CD4-positive, alpha-beta T cell (primary cell): ENCODE measurements at regions of chr1 and their contacts with region 1.

Region 1: GRCh38 chr1:3453203-3453761 is 1.2 kb upstream of the ARHGEF16 start:
- DNase-seq: peak; percentile 58 to 83 (median 68)
- ATAC-seq: peak; percentile 85
- H3K4me3 ChIP-seq: no peak overlapping the region
- H3K4me3 Mint-ChIP-seq: peak overlapping the region; percentile 81
- H3K27ac ChIP-seq: no peak overlapping the region
- H3K27ac Mint-ChIP-seq: no peak overlapping the region
- H3K4me1 ChIP-seq: peaks cover 22% of the 10 kb centered on the region
- H3K4me1 Mint-ChIP-seq: peaks cover 3% of the 10 kb centered on the region
- H3K27me3 ChIP-seq: peaks cover 19 to 21% of the 10 kb centered on the region in 2 experiments
- H3K27me3 Mint-ChIP-seq: peaks cover 18% of the 10 kb centered on the region
- CTCF ChIP-seq: peak; percentile 93

Region 2: GRCh38 chr1:3181956-3182355 is 271.3 kb before region 1 on chr1:
- CTCF ChIA-PET with region 1: no interaction called
- POLR2A ChIA-PET with region 1: no interaction called
- intact Hi-C with region 1: no loop called
- DNase-seq: no peak
- ATAC-seq: no peak
- H3K4me3 ChIP-seq: no peak overlapping the region
- H3K4me3 Mint-ChIP-seq: no peak overlapping the region
- H3K27ac ChIP-seq: no peak overlapping the region
- H3K27ac Mint-ChIP-seq: no peak overlapping the region
- H3K4me1 ChIP-seq: no peaks in the 10 kb centered on the region
- H3K4me1 Mint-ChIP-seq: no peaks in the 10 kb centered on the region
- H3K27me3 ChIP-seq: peaks cover 5 to 9% of the 10 kb centered on the region in 2 experiments
- H3K27me3 Mint-ChIP-seq: peaks cover 21% of the 10 kb centered on the region
- CTCF ChIP-seq: no peak

Region 3: GRCh38 chr1:3483801-3484444 is 30.6 kb after region 1 on chr1:
- CTCF ChIA-PET with region 1: interaction called, 6 read pairs
- POLR2A ChIA-PET with region 1: interaction called, 3 read pairs
- intact Hi-C with region 1: loop called (anchors 1 to 2 kb)
- DNase-seq: peak in 13 of 14 experiments; percentile 14 to 59 (median 29)
- ATAC-seq: peak; percentile 57
- H3K4me3 ChIP-seq: no peak overlapping the region
- H3K4me3 Mint-ChIP-seq: no peak overlapping the region
- H3K27ac ChIP-seq: no peak overlapping the region
- H3K27ac Mint-ChIP-seq: no peak overlapping the region
- H3K4me1 ChIP-seq: no peaks in the 10 kb centered on the region
- H3K4me1 Mint-ChIP-seq: no peaks in the 10 kb centered on the region
- H3K27me3 ChIP-seq: no peaks in the 10 kb centered on the region
- H3K27me3 Mint-ChIP-seq: no peaks in the 10 kb centered on the region
- CTCF ChIP-seq: peak; percentile 66

Region 4: GRCh38 chr1:3618881-3619671 is 165.8 kb after region 1 on chr1:
- CTCF ChIA-PET with region 1: interaction called, 23 read pairs
- POLR2A ChIA-PET with region 1: interaction called, 8 read pairs
- intact Hi-C with region 1: loop called (anchors 1 kb)
- DNase-seq: peak; percentile 58 to 90 (median 72)
- ATAC-seq: peak; percentile 96
- H3K4me3 ChIP-seq: no peak overlapping the region
- H3K4me3 Mint-ChIP-seq: peak overlapping the region; percentile 49
- H3K27ac ChIP-seq: no peak overlapping the region
- H3K27ac Mint-ChIP-seq: peak overlapping the region; percentile 8
- H3K4me1 ChIP-seq: peaks cover 29% of the 10 kb centered on the region
- H3K4me1 Mint-ChIP-seq: peaks cover 41% of the 10 kb centered on the region
- H3K27me3 ChIP-seq: peaks cover 0 to 2% of the 10 kb centered on the region in 2 experiments
- H3K27me3 Mint-ChIP-seq: peaks cover 14% of the 10 kb centered on the region
- CTCF ChIP-seq: peak; percentile 76

Region 5: DNA sequence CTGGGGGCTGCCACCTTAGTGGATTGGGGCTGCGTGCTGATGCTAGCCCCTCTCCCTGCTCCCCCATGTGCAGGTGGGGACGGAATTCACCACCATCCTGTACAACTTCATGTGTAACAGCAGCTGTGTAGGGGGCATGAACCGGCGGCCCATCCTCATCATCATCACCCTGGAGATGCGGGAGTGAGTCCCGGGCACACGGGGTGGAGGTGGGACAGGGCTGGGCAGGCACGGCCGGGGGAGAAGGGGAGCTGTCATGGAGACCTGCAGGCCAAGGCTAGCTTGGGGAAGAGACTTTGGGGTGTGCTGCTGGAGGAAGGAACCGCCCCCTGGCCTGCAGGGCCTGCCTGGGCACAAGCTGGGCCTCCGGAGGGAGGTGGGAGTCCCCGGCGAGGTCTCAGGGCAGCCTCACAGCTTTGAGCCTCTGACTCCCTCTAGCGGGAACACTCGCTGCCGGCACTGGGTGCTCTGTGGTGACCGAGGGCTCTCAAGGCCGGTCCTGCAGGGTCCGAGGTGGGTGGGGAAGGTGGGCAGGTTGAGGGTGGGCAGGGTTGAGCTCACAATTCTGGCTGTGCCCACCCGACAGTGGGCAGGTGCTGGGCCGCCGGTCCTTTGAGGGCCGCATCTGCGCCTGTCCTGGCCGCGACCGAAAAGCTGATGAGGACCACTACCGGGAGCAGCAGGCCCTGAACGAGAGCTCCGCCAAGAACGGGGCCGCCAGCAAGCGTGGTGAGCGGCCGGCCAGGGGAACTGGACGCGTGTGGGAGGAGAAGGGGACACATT is 274.0 kb after region 1 on chr1:
- CTCF ChIA-PET with region 1: interaction called, 13 read pairs
- POLR2A ChIA-PET with region 1: interaction called, 4 read pairs
- intact Hi-C with region 1: loop called (anchors 1 kb)
- DNase-seq: peak in 1 of 14 experiments; percentile 16
- ATAC-seq: no peak
- H3K4me3 ChIP-seq: no peak overlapping the region
- H3K4me3 Mint-ChIP-seq: no peak overlapping the region
- H3K27ac ChIP-seq: no peak overlapping the region
- H3K27ac Mint-ChIP-seq: no peak overlapping the region
- H3K4me1 ChIP-seq: peaks cover 2% of the 10 kb centered on the region
- H3K4me1 Mint-ChIP-seq: peaks cover 5% of the 10 kb centered on the region
- H3K27me3 ChIP-seq: no peaks in the 10 kb centered on the region
- H3K27me3 Mint-ChIP-seq: peaks cover 16% of the 10 kb centered on the region
- CTCF ChIP-seq: no peak

Region 6: DNA sequence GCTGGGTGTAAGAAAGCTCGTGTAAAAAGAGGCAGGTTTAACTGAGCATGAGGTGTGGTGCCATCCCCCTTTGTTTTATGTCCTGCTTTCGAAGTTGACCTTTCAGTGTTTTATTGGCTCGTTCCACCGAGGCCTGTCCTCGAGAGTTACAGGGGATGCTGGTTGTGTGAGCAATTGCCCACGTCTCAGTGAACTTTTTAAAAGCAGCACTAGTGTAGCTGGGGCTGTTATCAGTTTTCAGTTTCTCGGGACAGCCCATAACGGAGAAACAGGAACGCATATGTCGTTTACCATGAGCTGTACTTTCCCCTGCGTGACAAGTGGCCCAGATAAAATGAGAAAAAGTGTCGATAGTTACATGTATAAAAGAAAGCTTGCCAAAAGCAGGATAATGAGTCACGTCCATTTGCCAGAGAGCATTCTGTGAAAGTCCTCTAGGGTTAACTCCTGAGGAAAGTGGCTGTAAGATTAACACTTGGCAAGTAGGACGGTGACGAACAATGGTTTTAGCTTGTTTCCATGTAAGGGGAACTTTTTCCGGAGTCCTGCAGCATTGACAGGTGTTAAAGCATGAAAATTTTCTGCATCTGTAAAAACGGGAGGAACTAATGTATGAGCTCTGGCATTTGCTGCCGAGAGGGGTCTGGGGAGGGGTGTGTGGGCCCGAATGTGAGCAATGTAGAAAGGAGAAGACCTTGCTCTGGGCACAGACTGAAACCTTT is 350.8 kb after region 1 on chr1:
- CTCF ChIA-PET with region 1: interaction called, 3 read pairs
- POLR2A ChIA-PET with region 1: no interaction called
- intact Hi-C with region 1: loop called (anchors 2 to 5 kb)
- DNase-seq: no peak
- ATAC-seq: no peak
- H3K4me3 ChIP-seq: no peak overlapping the region
- H3K4me3 Mint-ChIP-seq: no peak overlapping the region
- H3K27ac ChIP-seq: no peak overlapping the region
- H3K27ac Mint-ChIP-seq: no peak overlapping the region
- H3K4me1 ChIP-seq: peaks cover 3% of the 10 kb centered on the region
- H3K4me1 Mint-ChIP-seq: peaks cover 7% of the 10 kb centered on the region
- H3K27me3 ChIP-seq: peaks cover 7 to 15% of the 10 kb centered on the region in 2 experiments
- H3K27me3 Mint-ChIP-seq: peaks cover 50% of the 10 kb centered on the region
- CTCF ChIP-seq: no peak